Activated B cell treated with CpG ODN at 0.5 μM for 24 hours (primary cell): ENCODE measurements at regions of chr4 and their contacts with region 1.

Region 1: DNA sequence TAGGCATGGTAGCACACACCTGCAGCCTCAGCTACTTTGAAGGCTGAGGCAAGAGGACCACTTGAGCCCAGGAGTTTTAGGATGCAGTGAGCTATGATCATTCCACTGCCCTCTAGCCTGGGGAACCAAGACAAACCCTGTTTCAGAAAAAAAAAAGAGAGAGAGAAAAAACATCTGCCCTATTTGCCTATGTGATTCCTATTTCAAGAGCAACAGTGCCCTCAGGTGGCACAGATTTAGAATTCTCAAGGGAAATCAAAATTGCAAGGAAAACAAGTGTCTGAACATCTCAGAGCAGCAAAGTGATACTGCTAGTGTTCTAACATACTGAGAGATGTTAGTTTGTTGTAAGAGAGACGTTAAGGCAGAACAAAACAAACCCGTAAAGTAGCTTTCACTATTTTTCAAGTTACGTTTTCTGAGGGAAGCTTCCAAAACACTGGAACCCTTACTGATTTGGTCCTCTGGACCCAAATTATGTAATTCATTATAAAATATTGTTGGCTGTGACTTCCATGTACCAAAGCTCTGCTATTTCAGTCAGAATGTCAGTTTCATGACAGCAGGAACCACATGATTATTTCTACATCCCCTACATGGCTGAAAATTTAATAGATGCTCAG is 7.9 kb downstream of the BDH2 start:
- DNase-seq: no peak
- ATAC-seq: peak; percentile 88
- H3K4me3 Mint-ChIP-seq: no peak overlapping the region
- H3K27ac Mint-ChIP-seq: no peak overlapping the region
- H3K4me1 Mint-ChIP-seq: peaks cover 12% of the 10 kb centered on the region
- H3K27me3 Mint-ChIP-seq: no peaks in the 10 kb centered on the region
- CTCF ChIP-seq: peak; percentile 38

Region 2: GRCh38 chr4:103046416-103047290 is 45.1 kb before region 1 on chr4:
- CTCF ChIA-PET with region 1: interaction called, 21 read pairs
- POLR2A ChIA-PET with region 1: no interaction called
- intact Hi-C with region 1: loop called (anchors 1 kb)
- DNase-seq: no peak
- ATAC-seq: peak; percentile 93
- H3K4me3 Mint-ChIP-seq: no peak overlapping the region
- H3K27ac Mint-ChIP-seq: peak overlapping the region; percentile 14
- H3K4me1 Mint-ChIP-seq: peaks cover 10% of the 10 kb centered on the region
- H3K27me3 Mint-ChIP-seq: no peaks in the 10 kb centered on the region
- CTCF ChIP-seq: no peak

Region 3: DNA sequence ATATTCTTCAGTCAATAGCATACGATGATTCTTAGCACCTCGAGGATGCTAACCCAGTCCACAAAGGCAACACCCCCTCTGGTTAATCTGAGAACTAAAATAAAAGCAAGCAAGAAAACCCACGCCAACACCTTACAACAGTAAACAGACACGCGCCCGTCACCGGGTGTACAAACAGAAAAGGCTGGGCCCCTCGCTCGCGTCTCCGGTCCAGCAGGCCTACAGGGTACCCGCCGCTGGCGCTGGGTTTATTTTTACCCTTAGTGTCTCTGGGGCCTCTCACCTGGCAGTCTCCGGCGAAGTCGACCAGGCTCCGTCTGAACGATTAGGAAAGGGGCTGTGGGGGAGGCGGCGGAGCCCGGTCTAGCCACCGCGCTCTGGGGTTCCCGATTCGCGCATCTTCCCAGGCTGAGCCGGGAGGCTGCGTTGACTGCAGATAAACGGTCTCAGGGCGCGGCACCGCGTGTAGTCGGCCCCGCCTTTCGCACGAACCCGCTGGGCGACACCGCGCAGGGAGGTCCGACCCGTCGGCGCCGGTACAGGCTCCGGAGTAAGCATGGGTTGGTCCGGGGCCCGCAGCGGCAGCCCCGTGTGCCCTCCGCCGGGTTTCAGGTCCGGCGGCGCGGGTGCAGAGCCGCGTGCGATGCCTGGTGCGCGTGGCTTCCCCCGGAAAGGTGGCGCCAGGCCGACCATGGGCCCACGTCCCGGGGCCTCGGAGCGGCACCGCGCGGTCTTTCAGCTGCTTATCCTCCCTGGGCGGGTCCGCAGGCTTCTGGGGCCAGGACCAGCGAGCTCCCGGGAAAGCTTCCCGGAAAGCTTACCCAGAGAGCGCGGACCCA is 15.6 kb before region 1 on chr4:
- CTCF ChIA-PET with region 1: interaction called, 12 read pairs
- POLR2A ChIA-PET with region 1: interaction called, 7 read pairs
- intact Hi-C with region 1: loop called (anchors 1 kb)
- DNase-seq: peak; percentile 69
- ATAC-seq: peak; percentile 64
- H3K4me3 Mint-ChIP-seq: peak overlapping the region; percentile 96
- H3K27ac Mint-ChIP-seq: peak overlapping the region; percentile 99
- H3K4me1 Mint-ChIP-seq: peaks cover 45% of the 10 kb centered on the region
- H3K27me3 Mint-ChIP-seq: no peaks in the 10 kb centered on the region
- CTCF ChIP-seq: no peak